Thyroid gland (tissue), 4 donors: ENCODE measurements at regions of chr16 and their contacts with region 1.

Region 1: GRCh38 chr16:23182460-23183309 is at the start of gene SCNN1G:
- DNase-seq: peak; percentile 89 to 92
- H3K4me3 ChIP-seq: peak within 1 kb of the TSS; percentile 40 to 65 (median 50)
- H3K27ac ChIP-seq: peak within 1 kb of the TSS; percentile 48 to 73 (median 68)
- H3K4me1 ChIP-seq: peaks cover 9 to 15% of the 10 kb centered on the region in 2 donors
- H3K27me3 ChIP-seq: no peaks in the 10 kb centered on the region
- CTCF ChIP-seq: peak; percentile 92 to 100 (median 98)
- POLR2A ChIP-seq: peak in 1 of 2 donors; percentile 57
- total RNA-seq, gene SCNN1G: 3.4 to 6.5 (median 5.6) TPM

Region 2: GRCh38 chr16:23434380-23434779 is 251.7 kb after region 1 on chr16:
- intact Hi-C with region 1: loop called (anchors 5 kb)
- DNase-seq: peak in 1 of 2 donors; percentile 18
- H3K4me3 ChIP-seq: no peak overlapping the region
- H3K27ac ChIP-seq: no peak overlapping the region
- H3K4me1 ChIP-seq: peaks cover 8 to 16% of the 10 kb centered on the region in 2 donors
- H3K27me3 ChIP-seq: no peaks in the 10 kb centered on the region
- CTCF ChIP-seq: peak; percentile 80 to 96 (median 86)
- POLR2A ChIP-seq: no peak